ENCODE measurements at regions of chr11 and their contacts with region 1.

Region 1: GRCh38 chr11:103317118-103317517 is 207.9 kb downstream of the DYNC2H1 start:
- DNase-seq: no peak
- H3K4me3 Mint-ChIP-seq: no peak overlapping the region
- H3K27ac Mint-ChIP-seq: no peak overlapping the region
- H3K4me1 Mint-ChIP-seq: no peaks in the 10 kb centered on the region
- H3K27me3 Mint-ChIP-seq: no peaks in the 10 kb centered on the region
- CTCF ChIP-seq: no peak

Region 2: GRCh38 chr11:102727890-102728289 is 589.2 kb before region 1 on chr11:
- CTCF ChIA-PET with region 1: interaction called, 11 read pairs
- intact Hi-C with region 1: no loop called
- DNase-seq: no peak
- H3K4me3 Mint-ChIP-seq: no peak overlapping the region
- H3K27ac Mint-ChIP-seq: no peak overlapping the region
- H3K4me1 Mint-ChIP-seq: no peaks in the 10 kb centered on the region
- H3K27me3 Mint-ChIP-seq: no peaks in the 10 kb centered on the region
- CTCF ChIP-seq: no peak

Measured in Calu3 (cell line).